K562 (cell line): ENCODE measurements at regions of chr2 and their contacts with region 1.

Region 1: GRCh38 chr2:72993147-72993932 is 76.0 kb downstream of the EMX1 start:
- DNase-seq: peak; percentile 70 to 86 (median 79)
- ATAC-seq: peak; percentile 86
- H3K4me3 ChIP-seq: no peak overlapping the region
- H3K27ac ChIP-seq: no peak overlapping the region
- H3K4me1 ChIP-seq: peaks cover 0 to 12% of the 10 kb centered on the region in 2 experiments; a peak in 2 of 5 replicates
- H3K27me3 ChIP-seq: no peaks in the 10 kb centered on the region
- CTCF ChIP-seq: peak; percentile 68 to 79 (median 72)
- EP300 ChIP-seq: no peak
- POLR2A ChIP-seq: no peak
- RAD21 ChIP-seq: peak; percentile 52 to 68

Region 2: GRCh38 chr2:73071360-73072133 is 78.2 kb after region 1 on chr2 and contains the start of gene SFXN5:
- CTCF ChIA-PET with region 1: no interaction called
- POLR2A ChIA-PET with region 1: no interaction called
- in situ Hi-C with region 1: no loop called
- intact Hi-C with region 1: loop called (anchors 1 kb)
- DNase-seq: peak; percentile 98 to 100 (median 99)
- ATAC-seq: peak; percentile 91
- H3K4me3 ChIP-seq: peak within 1 kb of the TSS; percentile 68
- H3K27ac ChIP-seq: peak within 1 kb of the TSS; percentile 95
- H3K4me1 ChIP-seq: peaks cover 17 to 27% of the 10 kb centered on the region in 2 experiments
- H3K27me3 ChIP-seq: no peaks in the 10 kb centered on the region
- CTCF ChIP-seq: peak in 2 of 3 experiments; percentile 17 to 18; a peak in 1 of 6 replicates
- EP300 ChIP-seq: no peak
- POLR2A ChIP-seq: peak; percentile 94
- RAD21 ChIP-seq: no peak
- polyA plus RNA-seq, gene SFXN5: 8.3 to 13.4 TPM